BJ (cell line): ENCODE measurements at regions of chr18 and their contacts with region 1.

Region 1: GRCh38 chr18:75041586-75041985 is 167.4 kb downstream of the PTGR3 start:
- DNase-seq: no peak
- H3K4me3 ChIP-seq: no peak overlapping the region
- H3K27me3 ChIP-seq: no peaks in the 10 kb centered on the region
- CTCF ChIP-seq: peak; percentile 25; the same call in 1 of the 2 replicates

Region 2: DNA sequence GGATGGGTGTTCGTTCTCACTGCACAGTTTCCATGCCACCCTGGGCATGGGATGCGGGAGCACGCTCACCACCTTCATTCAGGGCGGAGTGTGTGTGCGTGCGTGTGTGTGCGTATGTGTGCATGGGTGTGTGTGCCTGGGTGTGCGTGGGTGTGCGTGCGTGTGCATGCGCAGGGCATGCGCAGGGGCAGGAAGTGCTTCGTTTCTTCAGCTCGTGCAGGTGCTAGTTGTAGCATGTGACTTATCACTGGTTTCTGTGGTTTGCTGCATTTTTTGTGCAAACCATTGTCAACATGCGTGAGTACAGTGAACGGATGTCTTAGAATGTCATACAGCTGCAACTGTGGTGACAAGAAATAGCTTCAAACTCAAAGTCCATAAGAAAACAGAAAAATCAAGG is 12.1 kb before region 1 on chr18:
- CTCF ChIA-PET with region 1: interaction called, 11 read pairs
- POLR2A ChIA-PET with region 1: no interaction called
- DNase-seq: no peak
- H3K4me3 ChIP-seq: no peak overlapping the region
- H3K27me3 ChIP-seq: no peaks in the 10 kb centered on the region
- CTCF ChIP-seq: no peak

Region 3: GRCh38 chr18:75198036-75198435 is 156.4 kb after region 1 on chr18:
- CTCF ChIA-PET with region 1: no interaction called
- POLR2A ChIA-PET with region 1: no interaction called
- DNase-seq: no peak
- H3K4me3 ChIP-seq: no peak overlapping the region
- H3K27me3 ChIP-seq: no peaks in the 10 kb centered on the region
- CTCF ChIP-seq: no peak